ENCODE measurements at regions of chr15 and their contacts with region 1.

Region 1: GRCh38 chr15:68875377-68876116 is 54.8 kb upstream of the SPESP1 start:
- DNase-seq: peak; percentile 88 to 98 (median 94)
- ATAC-seq: peak; percentile 96
- H3K4me3 ChIP-seq: no peak overlapping the region
- H3K4me1 ChIP-seq: no peaks in the 10 kb centered on the region
- CTCF ChIP-seq: peak; percentile 76

Region 2: GRCh38 chr15:68559345-68560310 is 315.9 kb before region 1 on chr15:
- intact Hi-C with region 1: loop called in 1 of 2 experiments (anchors 10 kb)
- DNase-seq: peak; percentile 75 to 80 (median 77)
- ATAC-seq: peak; percentile 95
- H3K4me3 ChIP-seq: no peak overlapping the region
- H3K4me1 ChIP-seq: no peaks in the 10 kb centered on the region
- CTCF ChIP-seq: peak; percentile 90

Region 3: DNA sequence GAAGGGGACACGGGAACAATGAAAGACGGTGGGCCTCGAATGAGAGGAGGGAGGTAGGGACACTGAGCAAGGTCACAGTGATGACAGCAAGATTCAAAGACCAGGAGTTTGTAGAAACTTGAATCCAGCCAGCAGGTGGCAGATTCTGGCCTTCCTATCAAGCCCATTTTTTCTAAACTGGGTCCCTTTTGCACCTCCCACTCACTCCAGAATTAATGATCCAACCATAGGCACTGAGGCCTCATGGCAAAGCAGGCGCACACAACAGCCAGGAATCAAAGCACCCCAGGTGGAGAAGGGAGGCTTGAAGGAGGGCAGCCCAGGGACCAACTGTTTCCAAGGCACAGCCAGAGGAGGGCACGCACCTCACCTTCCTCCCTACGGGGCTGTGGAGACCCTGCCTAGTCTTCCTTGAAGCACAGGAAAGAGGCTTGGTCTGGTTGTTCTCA is 145.1 kb before region 1 on chr15:
- intact Hi-C with region 1: loop called (anchors 10 kb)
- DNase-seq: peak in 1 of 3 donors; percentile 66
- ATAC-seq: peak; percentile 42
- H3K4me3 ChIP-seq: no peak overlapping the region
- H3K4me1 ChIP-seq: peaks cover 4% of the 10 kb centered on the region
- CTCF ChIP-seq: no peak

Region 4: DNA sequence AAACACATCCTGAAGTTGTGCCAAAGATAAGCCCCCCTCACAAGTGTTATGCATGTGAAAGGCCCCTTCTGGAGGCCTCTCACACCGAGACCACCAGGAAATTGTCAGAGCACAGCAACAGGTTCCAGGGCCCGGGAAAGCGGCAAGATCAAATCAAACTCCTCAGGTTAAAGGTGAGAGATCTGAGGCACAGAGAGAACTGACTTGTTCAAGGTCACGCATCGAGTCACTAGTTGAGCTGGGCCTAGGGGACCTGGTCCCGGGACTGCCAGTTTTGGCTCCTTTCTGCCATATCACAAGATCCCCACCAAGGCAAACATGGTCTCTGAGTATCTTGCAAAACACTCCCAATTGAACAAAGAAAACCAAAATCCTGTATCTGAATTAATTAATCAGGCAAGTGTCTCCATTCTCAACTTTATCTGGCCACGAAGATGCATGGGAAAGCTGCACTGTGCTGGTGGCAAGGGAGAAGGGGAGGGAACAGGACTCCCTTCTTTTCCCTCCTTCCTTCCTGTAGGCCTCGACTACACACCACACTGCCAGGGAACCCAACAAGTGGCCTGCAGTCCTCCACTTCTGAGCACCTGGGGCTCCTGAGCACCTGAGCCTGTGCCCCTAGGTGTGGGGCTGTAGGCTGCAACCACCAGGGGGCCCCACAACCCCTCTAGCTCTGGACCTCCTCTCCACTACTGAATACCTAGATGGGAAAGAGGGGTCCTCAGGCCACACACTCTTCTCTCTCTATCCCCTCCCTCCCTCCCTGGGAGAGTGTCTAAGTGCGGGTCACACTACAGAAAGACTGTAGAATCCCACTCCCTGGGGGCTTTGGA is 92.1 kb before region 1 on chr15:
- intact Hi-C with region 1: loop called in 1 of 2 experiments (anchors 10 kb)
- DNase-seq: peak in 2 of 3 donors; percentile 79 to 80
- ATAC-seq: peak; percentile 78
- H3K4me3 ChIP-seq: no peak overlapping the region
- H3K4me1 ChIP-seq: peaks cover 18% of the 10 kb centered on the region
- CTCF ChIP-seq: peak; percentile 67

Region 5: GRCh38 chr15:69035205-69035917 is 159.8 kb after region 1 on chr15:
- intact Hi-C with region 1: no loop called
- DNase-seq: peak in 2 of 3 donors; percentile 49 to 57
- ATAC-seq: peak; percentile 76
- H3K4me3 ChIP-seq: no peak overlapping the region
- H3K4me1 ChIP-seq: no peaks in the 10 kb centered on the region
- CTCF ChIP-seq: no peak

Measured in mucosa of descending colon (tissue), 3 donors.